Dorsolateral prefrontal cortex (tissue), 120 donors: ENCODE measurements at regions of chr14 and their contacts with region 1.

Region 1: GRCh38 chr14:73472185-73473114 is 14.1 kb upstream of the NUMB start:
- DNase-seq: no peak
- H3K4me3 ChIP-seq: peak overlapping the region in 1 of 59 donors; percentile 13
- H3K27ac ChIP-seq: peak overlapping the region in 10 of 59 donors; percentile 2 to 59 (median 29)
- H3K27me3 ChIP-seq: no peaks in the 10 kb centered on the region
- CTCF ChIP-seq: peak; percentile 65 to 89 (median 78)

Region 2: GRCh38 chr14:73295198-73295796 is 177.2 kb before region 1 on chr14:
- intact Hi-C with region 1: loop called (anchors 1 to 5 kb)
- DNase-seq: no peak
- H3K4me3 ChIP-seq: no peak overlapping the region
- H3K27ac ChIP-seq: no peak overlapping the region
- H3K27me3 ChIP-seq: no peaks in the 10 kb centered on the region
- CTCF ChIP-seq: peak; percentile 62 to 90 (median 77)